Psoas muscle (tissue), 8 donors: ENCODE measurements at regions of chr3 and their contacts with region 1.

Region 1: GRCh38 chr3:101512646-101513418 is at the start of gene SENP7:
- DNase-seq: peak; percentile 86 to 92
- ATAC-seq: peak; percentile 83 to 93 (median 85)
- H3K4me3 ChIP-seq: peak within 1 kb of the TSS; percentile 86
- H3K27ac ChIP-seq: peak within 1 kb of the TSS; percentile 90
- H3K4me1 ChIP-seq: peaks cover 3% of the 10 kb centered on the region
- H3K27me3 ChIP-seq: peaks cover 0 to 10% (median 0%) of the 10 kb centered on the region in 3 donors
- CTCF ChIP-seq: no peak
- total RNA-seq, gene SENP7: 7.7 to 8.7 (median 8.2) TPM

Region 2: GRCh38 chr3:101195951-101196713 is 316.7 kb before region 1 on chr3:
- intact Hi-C with region 1: no loop called
- DNase-seq: no peak
- ATAC-seq: peak; percentile 36 to 73 (median 52)
- H3K4me3 ChIP-seq: no peak overlapping the region
- H3K27ac ChIP-seq: no peak overlapping the region
- H3K4me1 ChIP-seq: no peaks in the 10 kb centered on the region
- H3K27me3 ChIP-seq: no peaks in the 10 kb centered on the region
- CTCF ChIP-seq: peak; percentile 58

Region 3: DNA sequence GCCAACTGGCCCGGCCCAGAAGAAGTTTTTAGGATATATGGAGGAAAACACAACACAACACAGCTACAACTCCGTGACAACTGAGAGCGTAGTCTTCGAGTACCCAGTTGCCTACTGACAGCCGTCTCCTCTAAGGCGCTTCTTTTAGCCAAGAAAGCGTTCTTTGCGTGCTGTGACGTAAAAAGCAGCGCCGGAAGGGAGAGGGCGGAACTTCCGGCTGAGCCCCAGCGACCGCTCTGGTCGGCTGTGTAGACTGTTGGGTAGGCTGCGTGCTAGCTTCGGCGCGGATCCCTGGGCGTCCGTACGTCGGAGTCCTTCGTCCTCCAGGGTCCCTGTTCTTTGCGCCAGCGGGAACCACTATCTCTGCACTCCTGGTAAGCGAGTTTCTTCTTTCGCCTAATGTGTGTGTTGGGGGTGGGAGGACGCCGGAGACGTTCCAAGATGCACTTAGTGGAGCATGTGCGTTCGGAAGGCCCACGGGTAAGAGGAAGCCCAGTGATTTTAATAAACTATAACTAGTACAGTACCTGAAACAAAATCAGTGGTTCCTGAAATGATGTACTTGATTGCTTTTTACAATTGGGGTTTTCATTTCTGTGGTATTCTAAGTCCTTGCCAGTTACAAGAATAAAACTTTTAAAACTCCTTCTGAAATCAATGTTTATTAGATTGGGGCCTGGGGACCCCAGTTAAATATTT is 48.9 kb after region 1 on chr3 and contains the start of gene TRMT10C:
- intact Hi-C with region 1: loop called (anchors 1 to 5 kb)
- DNase-seq: peak; percentile 89 to 95
- ATAC-seq: peak; percentile 99 to 100 (median 100)
- H3K4me3 ChIP-seq: peak within 1 kb of the TSS; percentile 88
- H3K27ac ChIP-seq: peak within 1 kb of the TSS; percentile 93
- H3K4me1 ChIP-seq: peaks cover 15% of the 10 kb centered on the region
- H3K27me3 ChIP-seq: peaks cover 0 to 10% (median 4%) of the 10 kb centered on the region in 3 donors
- CTCF ChIP-seq: no peak
- total RNA-seq, gene TRMT10C: 23.4 to 34.6 (median 26.8) TPM

Region 4: DNA sequence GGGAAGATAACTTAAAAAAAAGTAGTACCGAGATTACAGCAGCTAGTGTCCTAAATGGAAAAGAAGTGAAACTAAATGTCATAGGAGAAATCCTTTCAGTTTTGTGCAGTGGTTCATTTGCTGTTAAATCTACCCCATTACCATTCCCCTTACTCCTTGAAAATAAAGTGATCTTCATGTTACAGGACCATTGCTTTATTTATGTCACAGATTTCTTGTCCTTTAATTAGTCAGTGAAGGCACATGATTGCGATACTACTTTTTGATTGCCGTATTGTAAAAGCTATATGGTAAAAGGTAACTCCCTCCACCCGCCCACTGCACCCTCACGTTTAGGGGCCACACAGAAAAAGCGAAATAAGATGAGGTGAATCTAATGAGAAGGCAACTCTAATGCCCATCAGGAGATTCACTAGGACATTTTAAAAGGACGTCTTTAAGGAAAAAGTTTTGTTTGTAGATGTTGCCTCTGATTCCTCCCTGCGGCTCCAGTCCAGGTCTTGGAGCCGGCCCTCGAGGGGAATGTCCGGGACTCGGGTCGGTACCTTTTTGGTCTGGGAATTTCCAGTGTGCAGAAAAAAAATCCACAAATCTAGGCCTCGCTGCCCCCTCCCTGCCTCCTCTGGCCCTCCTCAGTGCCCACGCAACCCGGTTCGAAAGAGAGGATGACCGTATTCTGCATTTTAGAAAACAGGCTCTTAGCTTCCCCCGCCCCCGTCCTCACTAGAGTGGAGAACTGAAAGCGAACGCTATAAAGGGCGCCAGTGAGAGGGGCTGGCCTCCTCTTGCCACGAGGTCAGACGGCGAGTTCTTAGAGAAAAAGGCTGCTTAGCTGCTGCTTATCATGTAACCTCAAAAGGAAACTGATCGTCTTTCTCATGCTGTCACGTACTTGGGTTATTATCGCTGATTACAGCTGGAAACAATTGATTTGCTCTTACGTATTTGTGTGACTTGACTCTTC is 314.7 kb after region 1 on chr3:
- intact Hi-C with region 1: no loop called
- DNase-seq: peak; percentile 56 to 71
- ATAC-seq: peak; percentile 71 to 82 (median 76)
- H3K4me3 ChIP-seq: peak overlapping the region; percentile 70
- H3K27ac ChIP-seq: peak overlapping the region; percentile 67
- H3K4me1 ChIP-seq: peaks cover 23% of the 10 kb centered on the region
- H3K27me3 ChIP-seq: no peaks in the 10 kb centered on the region
- CTCF ChIP-seq: no peak